GM12878 (cell line): ENCODE measurements at regions of chr16 and their contacts with region 1.

Region 1: DNA sequence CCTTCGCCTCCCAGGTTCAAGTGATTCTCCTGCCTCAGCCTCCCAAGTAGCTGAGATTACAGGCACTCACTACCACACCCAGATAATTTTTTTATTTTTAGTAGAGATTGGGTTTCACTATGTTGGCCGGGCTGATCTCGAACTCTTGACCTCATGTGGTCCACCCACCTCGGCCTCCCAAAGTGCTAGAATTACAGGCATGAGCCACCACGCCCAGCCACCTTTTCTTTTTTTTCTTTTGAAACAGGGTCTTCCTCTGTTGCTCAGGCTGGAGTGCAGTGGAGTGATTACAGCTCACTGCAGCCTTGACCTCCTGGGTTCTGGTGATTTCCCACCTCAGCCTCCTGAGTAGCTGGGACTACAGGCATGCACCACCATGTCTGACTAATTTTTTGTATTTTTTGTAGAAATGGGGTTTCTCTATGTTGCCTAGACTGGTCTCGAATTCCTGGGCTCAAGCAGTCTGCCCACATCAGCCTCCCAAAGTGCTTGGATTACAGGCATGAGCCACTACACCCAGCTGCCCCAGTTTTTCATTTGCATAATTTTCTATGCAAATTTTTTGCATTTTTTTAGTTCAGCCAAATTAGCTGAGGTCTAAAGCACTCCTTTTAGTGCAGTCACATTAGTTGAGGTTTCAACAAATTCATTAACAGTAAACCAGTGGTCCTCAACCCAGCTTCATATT is 11.3 kb downstream of the WWP2 start:
- DNase-seq: no peak
- ATAC-seq: peak; percentile 45
- H3K4me3 ChIP-seq: no peak overlapping the region
- H3K27ac ChIP-seq: no peak overlapping the region
- H3K4me1 ChIP-seq: peaks cover 30% of the 10 kb centered on the region
- H3K27me3 ChIP-seq: no peaks in the 10 kb centered on the region
- CTCF ChIP-seq: no peak
- EP300 ChIP-seq: no peak
- POLR2A ChIP-seq: no peak
- RAD21 ChIP-seq: no peak

Region 2: DNA sequence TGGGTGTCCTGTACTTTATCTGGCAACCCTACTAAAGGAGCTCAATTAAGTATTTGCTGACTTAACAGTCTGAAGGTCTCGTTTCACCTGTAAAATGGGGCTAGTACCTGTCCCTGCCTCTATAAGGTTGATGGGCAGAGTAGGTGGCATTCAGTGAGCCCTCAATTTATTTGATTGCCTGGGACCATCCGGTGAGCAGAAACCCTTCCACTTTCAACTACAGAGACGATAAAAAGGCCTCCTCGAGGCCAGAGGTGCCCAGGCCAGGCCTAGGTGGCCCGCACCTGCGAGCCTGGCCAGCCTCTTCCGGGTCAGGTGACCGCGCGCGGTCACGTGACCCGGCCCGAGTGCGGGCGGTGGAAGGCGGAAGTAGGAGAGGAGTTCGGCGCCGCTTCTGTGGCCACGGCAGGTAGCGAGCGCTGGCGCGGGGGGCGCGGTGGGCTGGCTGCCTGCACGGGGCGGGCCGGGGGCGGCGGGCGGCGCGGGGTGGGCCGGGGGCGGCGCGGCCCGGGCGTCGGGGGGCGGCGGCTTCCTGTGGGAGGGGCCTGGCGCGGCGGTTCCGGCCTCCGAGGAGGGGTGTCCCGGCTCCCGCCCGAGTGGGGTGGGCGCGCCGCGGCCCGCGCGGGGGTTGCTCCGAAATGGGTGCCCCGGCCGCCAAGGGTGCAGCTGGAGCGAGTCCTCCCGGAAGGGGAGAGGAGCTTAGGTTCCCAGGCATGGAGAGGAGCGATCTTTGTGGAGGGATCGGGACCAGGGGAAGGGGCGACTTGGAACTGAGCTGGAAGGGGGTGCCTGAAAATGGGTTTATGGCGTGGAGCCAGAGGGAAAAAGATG is 11.2 kb before region 1 on chr16 and contains the start of gene WWP2:
- CTCF ChIA-PET with region 1: interaction called, 4 read pairs
- POLR2A ChIA-PET with region 1: interaction called, 11 read pairs
- RAD21 ChIA-PET with region 1: interaction called, 10 read pairs
- SMC1A ChIA-PET with region 1: interaction called, 9 read pairs
- in situ Hi-C with region 1: no loop called
- intact Hi-C with region 1: no loop called
- DNase-seq: peak; percentile 34
- ATAC-seq: peak; percentile 85
- H3K4me3 ChIP-seq: peak within 1 kb of the TSS; percentile 89
- H3K27ac ChIP-seq: peak within 1 kb of the TSS; percentile 83
- H3K4me1 ChIP-seq: peaks cover 2% of the 10 kb centered on the region; the same call in 1 of the 2 replicates
- H3K27me3 ChIP-seq: no peaks in the 10 kb centered on the region
- CTCF ChIP-seq: no peak
- EP300 ChIP-seq: no peak
- POLR2A ChIP-seq: peak; percentile 89
- RAD21 ChIP-seq: no peak
- polyA plus RNA-seq, gene WWP2: 2.8 to 2.9 TPM